Activated CD4-positive, alpha-beta T cell treated with anti-CD3 and anti-CD28 coated beads, Interleukin-2, amount 10 ng/mL, durations not matched to agents 24 days and 14 days (primary cell): ENCODE measurements at regions of chr1 and their contacts with region 1.

Region 1: GRCh38 chr1:64966158-64966971 is at the start of gene JAK1:
- DNase-seq: peak; percentile 96
- H3K4me3 Mint-ChIP-seq: peak within 1 kb of the TSS; percentile 85
- H3K27ac Mint-ChIP-seq: peak within 1 kb of the TSS; percentile 89
- H3K4me1 Mint-ChIP-seq: peaks cover 51% of the 10 kb centered on the region
- H3K27me3 Mint-ChIP-seq: peaks cover 2% of the 10 kb centered on the region
- total RNA-seq, gene JAK1: 86.5 and 86.6 TPM in 2 replicates

Region 2: GRCh38 chr1:63522891-63523728 is 1443.3 kb before region 1 on chr1 and contains the starts of genes EFCAB7 and ITGB3BP:
- intact Hi-C with region 1: loop called (anchors 2 kb)
- DNase-seq: peak; percentile 96
- H3K4me3 Mint-ChIP-seq: peak within 1 kb of the TSS; percentile 87
- H3K27ac Mint-ChIP-seq: peak within 1 kb of the TSS; percentile 98
- H3K4me1 Mint-ChIP-seq: peaks cover 29% of the 10 kb centered on the region
- H3K27me3 Mint-ChIP-seq: no peaks in the 10 kb centered on the region
- total RNA-seq, gene EFCAB7: 6.6 and 7.8 TPM in 2 replicates
- total RNA-seq, gene ITGB3BP: 51.1 and 53.4 TPM in 2 replicates

Region 3: GRCh38 chr1:64948905-64949833 is 17.2 kb before region 1 on chr1:
- intact Hi-C with region 1: loop called (anchors 2 kb)
- DNase-seq: no peak
- H3K4me3 Mint-ChIP-seq: peak overlapping the region; percentile 20
- H3K27ac Mint-ChIP-seq: peak overlapping the region; percentile 55
- H3K4me1 Mint-ChIP-seq: peaks cover 50% of the 10 kb centered on the region
- H3K27me3 Mint-ChIP-seq: no peaks in the 10 kb centered on the region

Region 4: DNA sequence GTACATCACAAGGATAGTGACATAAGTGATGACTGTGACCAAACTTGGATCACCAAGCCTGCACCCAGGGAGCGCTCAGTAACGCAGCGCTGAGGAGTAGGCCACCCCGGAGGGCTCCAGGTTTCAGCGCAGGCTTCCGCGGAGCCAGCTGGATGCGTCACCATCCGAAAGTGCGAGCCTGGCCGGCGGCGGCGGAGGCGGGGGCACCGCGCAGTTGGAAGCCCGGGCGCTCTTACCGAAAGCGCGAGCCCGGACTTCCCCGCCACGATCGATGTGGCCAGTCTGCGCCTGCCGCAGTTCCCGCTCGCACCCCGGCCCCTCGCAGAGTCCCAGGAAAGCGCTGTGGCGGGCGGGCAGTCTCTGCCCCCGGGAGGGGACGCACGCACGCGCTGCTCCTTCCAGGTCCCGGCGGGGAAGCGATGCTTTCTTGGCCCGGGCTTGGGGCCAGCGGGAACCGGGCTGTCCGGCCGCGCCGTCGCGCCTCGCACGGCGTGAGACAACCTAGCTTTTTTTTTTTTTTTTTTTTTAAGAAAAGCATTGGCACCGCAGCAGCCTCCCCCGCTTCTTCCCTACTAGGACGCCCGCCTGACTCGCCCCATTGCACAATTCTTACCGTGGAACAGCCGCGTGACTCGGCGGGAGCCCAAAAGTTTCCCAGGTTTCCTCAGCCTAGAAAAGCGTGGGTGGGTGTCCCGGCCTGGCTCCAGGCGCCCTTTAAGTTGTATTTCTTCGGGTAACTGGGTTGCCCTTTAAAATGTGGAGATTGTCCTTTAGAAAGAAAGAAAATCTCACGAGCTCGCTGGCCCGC is 36.3 kb after region 1 on chr1:
- intact Hi-C with region 1: loop called (anchors 1 kb)
- DNase-seq: peak; percentile 90
- H3K4me3 Mint-ChIP-seq: peak overlapping the region; percentile 70
- H3K27ac Mint-ChIP-seq: peak overlapping the region; percentile 43
- H3K4me1 Mint-ChIP-seq: peaks cover 23% of the 10 kb centered on the region
- H3K27me3 Mint-ChIP-seq: peaks cover 33% of the 10 kb centered on the region

Region 5: GRCh38 chr1:65044378-65044777 is 78.0 kb after region 1 on chr1:
- intact Hi-C with region 1: loop called (anchors 5 kb)
- DNase-seq: no peak
- H3K4me3 Mint-ChIP-seq: no peak overlapping the region
- H3K27ac Mint-ChIP-seq: no peak overlapping the region
- H3K4me1 Mint-ChIP-seq: peaks cover 11% of the 10 kb centered on the region
- H3K27me3 Mint-ChIP-seq: no peaks in the 10 kb centered on the region

Region 6: GRCh38 chr1:65148548-65149350 is 182.4 kb after region 1 on chr1:
- intact Hi-C with region 1: loop called (anchors 2 kb)
- DNase-seq: peak; percentile 90
- H3K4me3 Mint-ChIP-seq: peak overlapping the region; percentile 93
- H3K27ac Mint-ChIP-seq: peak overlapping the region; percentile 96
- H3K4me1 Mint-ChIP-seq: peaks cover 41% of the 10 kb centered on the region
- H3K27me3 Mint-ChIP-seq: peaks cover 13% of the 10 kb centered on the region

Region 7: DNA sequence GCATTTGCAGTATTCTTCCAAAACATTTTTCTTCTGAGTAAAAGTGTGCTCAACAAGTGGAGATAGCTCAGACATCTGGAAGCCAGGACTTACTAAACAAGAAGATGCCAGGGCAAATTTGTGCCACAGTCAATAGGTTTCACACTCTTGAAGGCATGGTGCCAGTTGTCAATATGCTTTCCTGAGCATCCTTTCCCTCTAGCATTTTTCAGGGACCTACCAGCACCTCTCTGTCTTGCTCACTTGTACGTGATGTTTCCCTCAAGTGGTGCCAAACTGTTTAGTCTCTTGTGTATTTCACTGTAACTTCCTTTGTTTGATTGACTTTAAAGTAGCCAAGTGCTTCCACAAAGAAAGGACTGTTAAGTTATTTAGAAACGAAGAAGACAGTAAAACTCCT is 1373.6 kb after region 1 on chr1:
- intact Hi-C with region 1: loop called (anchors 10 kb)
- DNase-seq: peak; percentile 72
- H3K4me3 Mint-ChIP-seq: peak overlapping the region; percentile 74
- H3K27ac Mint-ChIP-seq: peak overlapping the region; percentile 81
- H3K4me1 Mint-ChIP-seq: peaks cover 58% of the 10 kb centered on the region
- H3K27me3 Mint-ChIP-seq: no peaks in the 10 kb centered on the region